A549 (cell line): ENCODE measurements at regions of chr10 and their contacts with region 1.

Region 1: DNA sequence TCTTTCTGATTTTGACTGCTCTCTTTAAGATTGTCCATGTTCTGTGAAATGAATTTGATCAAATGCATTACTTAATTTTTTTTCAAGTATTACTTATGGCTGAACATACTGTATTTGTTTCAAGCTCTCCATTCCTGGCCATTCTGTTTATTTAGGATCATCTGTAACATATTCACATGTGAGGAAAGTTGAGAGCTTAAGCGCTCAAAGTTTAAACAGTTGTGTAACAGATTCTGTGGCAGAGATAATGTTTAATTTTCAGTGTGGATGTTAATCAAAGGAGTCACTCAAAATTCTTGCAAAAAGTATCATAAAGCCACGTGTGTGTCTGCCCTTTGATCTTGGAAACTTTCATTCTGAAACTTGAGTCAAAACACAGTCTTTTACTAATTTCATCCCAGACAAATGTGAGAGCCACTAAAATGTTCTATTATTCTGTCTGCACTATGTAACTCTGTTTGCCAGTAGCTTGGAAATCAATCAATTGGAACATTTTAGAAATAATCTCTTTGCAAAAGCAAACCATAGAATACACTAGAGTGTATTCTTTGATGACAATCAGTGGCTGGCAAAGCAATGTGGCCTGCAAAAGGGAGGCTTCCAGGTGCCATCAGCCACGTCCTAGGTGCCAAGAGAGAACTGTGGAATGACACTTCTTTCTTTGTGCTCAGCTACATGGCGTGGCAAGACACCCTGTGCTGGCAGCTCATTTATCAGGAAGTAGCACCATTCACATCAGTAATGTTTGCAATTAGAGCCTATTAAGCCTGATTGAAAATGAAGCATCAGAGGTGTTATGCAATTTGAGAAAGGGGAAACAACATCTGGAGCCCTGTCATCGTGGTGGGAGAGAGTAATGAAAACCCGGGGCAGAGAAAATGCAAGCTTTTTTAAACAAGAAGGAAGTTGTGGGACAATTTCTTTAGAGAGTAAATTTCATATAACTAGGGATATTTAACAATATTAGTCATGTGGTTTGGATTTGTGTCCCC is 40.9 kb downstream of the ARL5B start:
- DNase-seq: no peak
- ATAC-seq: no peak
- H3K4me3 ChIP-seq: no peak overlapping the region
- H3K27ac ChIP-seq: no peak overlapping the region
- H3K4me1 ChIP-seq: no peaks in the 10 kb centered on the region
- CTCF ChIP-seq: no peak
- EP300 ChIP-seq: no peak
- POLR2A ChIP-seq: no peak
- RAD21 ChIP-seq: no peak

Region 2: GRCh38 chr10:18689498-18689897 is 10.6 kb before region 1 on chr10:
- CTCF ChIA-PET with region 1: interaction called, 15 read pairs
- POLR2A ChIA-PET with region 1: no interaction called
- DNase-seq: peak in 1 of 2 experiments; percentile 33
- ATAC-seq: peak; percentile 63 to 74; a peak in 3 of 6 replicates
- H3K4me3 ChIP-seq: no peak overlapping the region
- H3K27ac ChIP-seq: no peak overlapping the region
- H3K4me1 ChIP-seq: no peaks in the 10 kb centered on the region
- CTCF ChIP-seq: peak; percentile 65
- EP300 ChIP-seq: no peak
- POLR2A ChIP-seq: no peak
- RAD21 ChIP-seq: peak; percentile 75 to 84